Aorta (tissue), 5 donors: ENCODE measurements at regions of chr11 and their contacts with region 1.

Region 1: DNA sequence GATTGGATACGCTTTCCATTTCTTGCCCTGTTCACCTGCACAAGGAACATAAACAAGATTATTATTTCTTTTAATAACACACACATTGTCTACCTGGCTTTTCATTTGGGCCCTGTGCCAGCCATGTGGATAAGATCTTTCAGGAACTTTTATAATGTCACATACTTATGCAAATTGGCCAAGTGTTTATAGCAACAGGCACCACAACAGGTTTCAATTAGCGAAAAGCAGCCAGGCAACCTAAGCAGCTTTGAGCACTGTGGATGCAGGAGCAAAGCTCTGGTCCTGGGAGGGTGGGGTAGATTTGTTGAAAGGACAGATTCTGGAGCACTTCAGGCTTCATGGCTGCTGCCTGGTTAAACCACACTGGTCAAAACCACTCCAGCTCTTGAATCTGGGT is 217.4 kb downstream of the BARX2 start:
- DNase-seq: no peak
- ATAC-seq: no peak
- H3K4me3 ChIP-seq: no peak overlapping the region
- H3K27ac ChIP-seq: no peak overlapping the region
- H3K4me1 ChIP-seq: no peaks in the 10 kb centered on the region
- H3K27me3 ChIP-seq: no peaks in the 10 kb centered on the region

Region 2: GRCh38 chr11:129652828-129653227 is 59.7 kb after region 1 on chr11:
- intact Hi-C with region 1: loop called in 1 of 2 experiments (anchors 10 kb)
- DNase-seq: no peak
- ATAC-seq: no peak
- H3K4me3 ChIP-seq: no peak overlapping the region
- H3K27ac ChIP-seq: no peak overlapping the region
- H3K4me1 ChIP-seq: no peaks in the 10 kb centered on the region
- H3K27me3 ChIP-seq: no peaks in the 10 kb centered on the region